Lower leg skin (tissue), 4 donors: ENCODE measurements at regions of chr3 and their contacts with region 1.

Region 1: GRCh38 chr3:71849681-71850080 is 64.7 kb upstream of the PROK2 start:
- DNase-seq: no peak
- H3K4me3 ChIP-seq: no peak overlapping the region
- CTCF ChIP-seq: no peak
- POLR2A ChIP-seq: no peak

Region 2: DNA sequence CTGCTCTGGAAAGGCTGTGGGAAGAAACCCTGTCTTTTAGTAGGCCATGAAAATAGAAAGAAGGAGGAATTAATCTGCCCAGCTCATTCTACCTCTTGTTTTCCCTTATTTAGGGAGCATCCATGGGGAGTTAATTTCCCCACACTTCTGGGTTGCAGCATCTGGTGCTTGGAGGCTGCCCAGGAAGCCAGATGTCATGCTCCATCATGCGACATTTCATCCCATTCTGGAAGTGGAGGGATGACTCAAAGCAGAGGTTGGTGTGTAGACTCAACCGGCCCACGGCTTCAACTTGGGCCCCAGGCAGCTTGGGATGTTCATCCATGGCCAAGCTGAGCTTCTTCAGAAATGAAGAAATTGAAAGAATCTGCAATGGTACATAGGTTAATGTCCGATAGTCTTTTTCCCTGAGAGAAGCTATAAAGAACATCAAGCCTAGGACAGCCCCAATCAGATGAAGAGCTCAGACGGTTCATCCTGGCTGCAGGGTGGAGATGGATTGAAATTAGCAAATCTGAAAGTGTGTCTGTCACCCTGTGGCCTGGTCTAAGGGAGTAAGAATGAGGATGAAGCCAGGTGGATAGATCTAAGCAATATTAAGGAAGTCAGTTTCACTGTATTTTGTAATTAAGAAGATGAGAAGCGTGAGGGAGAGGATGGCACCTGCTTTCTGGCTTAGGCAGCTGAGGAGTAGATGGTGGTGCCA is 40.2 kb before region 1 on chr3:
- intact Hi-C with region 1: loop called (anchors 1 kb)
- DNase-seq: no peak
- H3K4me3 ChIP-seq: no peak overlapping the region
- CTCF ChIP-seq: no peak
- POLR2A ChIP-seq: no peak